Upper lobe of right lung (tissue), 1 donor: ENCODE measurements at regions of chr17 and their contacts with region 1.

Region 1: GRCh38 chr17:48618256-48618897 is 3.3 kb upstream of the HOXB8 start:
- DNase-seq: peak; percentile 92
- ATAC-seq: peak; percentile 95
- H3K4me3 ChIP-seq: no peak overlapping the region
- H3K27ac ChIP-seq: no peak overlapping the region
- H3K4me1 ChIP-seq: peaks cover 3% of the 10 kb centered on the region
- H3K27me3 ChIP-seq: peaks cover 100% of the 10 kb centered on the region
- CTCF ChIP-seq: peak; percentile 98

Region 2: DNA sequence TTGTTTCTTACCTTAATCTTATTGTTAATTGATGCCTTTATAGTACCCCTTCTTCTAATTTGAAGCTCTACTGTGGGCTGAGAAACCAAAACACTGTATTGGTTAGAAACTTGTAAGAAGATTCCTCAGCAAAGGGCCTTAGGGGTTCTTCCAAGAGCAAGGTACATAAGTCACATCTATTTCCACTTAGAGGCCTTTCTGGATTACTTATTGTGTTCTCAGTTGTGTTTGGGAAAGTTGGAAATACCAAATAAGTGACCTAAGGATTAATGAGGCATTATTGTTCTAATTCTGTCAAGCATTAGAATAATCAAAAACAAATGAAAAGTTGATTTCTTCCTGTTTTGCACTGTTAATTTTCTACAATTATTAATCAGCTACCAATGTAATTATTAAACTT is 274.1 kb before region 1 on chr17:
- intact Hi-C with region 1: loop called (anchors 10 kb)
- DNase-seq: no peak
- ATAC-seq: no peak
- H3K4me3 ChIP-seq: no peak overlapping the region
- H3K27ac ChIP-seq: no peak overlapping the region
- H3K4me1 ChIP-seq: no peaks in the 10 kb centered on the region
- H3K27me3 ChIP-seq: peaks cover 53% of the 10 kb centered on the region
- CTCF ChIP-seq: no peak

Region 3: DNA sequence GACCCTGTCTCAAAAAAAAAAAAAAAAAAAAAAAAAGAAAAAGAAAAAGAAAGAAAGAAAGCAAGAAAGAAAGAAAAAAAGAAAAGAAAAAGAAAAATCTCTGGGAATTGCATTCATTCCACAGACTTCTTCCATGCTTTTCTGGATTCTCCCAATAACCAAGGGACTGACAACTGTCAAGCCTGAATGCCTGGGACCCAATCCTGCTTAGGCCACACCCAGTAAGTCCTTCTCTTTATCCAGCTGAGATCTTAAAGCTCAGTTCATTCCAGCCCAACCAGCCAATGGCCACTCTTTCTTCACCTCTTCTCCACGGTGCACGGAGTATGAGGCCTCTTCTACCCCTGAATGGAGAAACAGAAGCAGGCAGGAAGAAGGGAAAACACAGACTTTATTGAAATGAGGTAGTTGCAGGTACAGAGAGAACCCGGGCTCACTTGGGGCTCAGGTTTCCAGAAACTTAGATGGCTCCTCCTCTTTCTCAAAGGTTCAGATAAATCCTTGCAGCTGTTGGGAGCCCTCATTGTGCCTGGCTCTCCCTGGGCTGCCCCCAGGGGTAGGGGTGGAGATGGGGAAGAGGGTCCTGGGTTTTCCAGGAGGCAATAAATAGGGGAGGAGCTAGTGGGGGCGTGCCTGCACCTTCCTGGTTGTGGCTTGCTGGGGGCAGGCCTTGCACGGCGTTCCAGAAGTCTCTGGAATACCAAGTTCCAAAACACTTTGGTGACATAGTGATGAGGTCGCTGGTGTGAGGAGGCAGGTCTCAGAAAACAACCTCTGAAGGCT is 90.0 kb before region 1 on chr17:
- intact Hi-C with region 1: no loop called
- DNase-seq: no peak
- ATAC-seq: no peak
- H3K4me3 ChIP-seq: no peak overlapping the region
- H3K27ac ChIP-seq: no peak overlapping the region
- H3K4me1 ChIP-seq: peaks cover 5% of the 10 kb centered on the region
- H3K27me3 ChIP-seq: peaks cover 45% of the 10 kb centered on the region
- CTCF ChIP-seq: no peak